Activated naive CD4-positive, alpha-beta T cell treated with anti-CD3 and anti-CD28 coated beads, Interleukin-2, amount 10 ng/mL, durations not matched to agents 7 days and 5 days (primary cell): ENCODE measurements at regions of chr2 and their contacts with region 1.

Region 1: DNA sequence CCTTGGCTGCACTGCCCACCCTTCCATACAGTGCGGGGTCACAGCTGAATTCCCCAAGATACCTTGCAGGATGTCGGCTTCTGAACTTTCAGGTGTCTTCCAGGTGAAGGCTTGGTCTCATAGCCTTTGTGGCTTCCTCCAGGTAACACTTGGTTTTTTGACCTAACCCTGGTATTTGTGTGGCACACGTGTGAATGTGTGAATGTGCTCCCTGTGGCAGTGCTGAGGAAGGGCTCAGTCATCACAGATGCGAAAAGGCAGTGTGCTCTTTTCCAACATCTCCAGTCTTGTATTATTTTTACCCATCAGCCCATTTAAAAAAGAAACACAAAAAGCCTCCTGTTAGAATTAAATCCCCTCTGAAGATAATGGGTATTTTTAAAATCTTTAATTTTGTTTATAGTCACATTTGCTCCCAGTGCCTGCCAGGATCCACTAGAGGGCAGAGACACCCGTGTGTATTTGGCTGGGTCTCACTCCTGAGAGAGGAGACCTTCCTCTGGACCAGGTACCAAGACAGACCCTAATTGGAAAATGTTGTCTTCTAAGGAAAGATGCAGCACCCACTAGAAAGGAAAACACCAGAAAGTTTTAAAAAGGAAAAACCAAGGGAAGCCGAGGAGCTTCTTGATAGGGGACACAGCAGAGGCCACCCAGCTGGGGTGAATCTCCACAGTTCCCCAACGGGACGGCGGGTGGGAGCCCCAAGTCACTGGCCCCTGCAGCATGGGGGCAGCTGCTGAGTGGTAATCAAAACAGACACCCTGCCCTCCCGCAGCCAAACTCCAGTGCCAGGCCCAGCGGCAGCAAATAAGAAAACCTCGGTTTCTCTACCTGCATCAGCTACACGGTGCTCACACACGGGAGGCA is 27.7 kb downstream of the FAM110C start:
- DNase-seq: no peak
- H3K4me3 Mint-ChIP-seq: no peak overlapping the region
- H3K27ac Mint-ChIP-seq: no peak overlapping the region
- H3K4me1 Mint-ChIP-seq: peaks cover 7% of the 10 kb centered on the region
- H3K27me3 Mint-ChIP-seq: peaks cover 34% of the 10 kb centered on the region

Region 2: DNA sequence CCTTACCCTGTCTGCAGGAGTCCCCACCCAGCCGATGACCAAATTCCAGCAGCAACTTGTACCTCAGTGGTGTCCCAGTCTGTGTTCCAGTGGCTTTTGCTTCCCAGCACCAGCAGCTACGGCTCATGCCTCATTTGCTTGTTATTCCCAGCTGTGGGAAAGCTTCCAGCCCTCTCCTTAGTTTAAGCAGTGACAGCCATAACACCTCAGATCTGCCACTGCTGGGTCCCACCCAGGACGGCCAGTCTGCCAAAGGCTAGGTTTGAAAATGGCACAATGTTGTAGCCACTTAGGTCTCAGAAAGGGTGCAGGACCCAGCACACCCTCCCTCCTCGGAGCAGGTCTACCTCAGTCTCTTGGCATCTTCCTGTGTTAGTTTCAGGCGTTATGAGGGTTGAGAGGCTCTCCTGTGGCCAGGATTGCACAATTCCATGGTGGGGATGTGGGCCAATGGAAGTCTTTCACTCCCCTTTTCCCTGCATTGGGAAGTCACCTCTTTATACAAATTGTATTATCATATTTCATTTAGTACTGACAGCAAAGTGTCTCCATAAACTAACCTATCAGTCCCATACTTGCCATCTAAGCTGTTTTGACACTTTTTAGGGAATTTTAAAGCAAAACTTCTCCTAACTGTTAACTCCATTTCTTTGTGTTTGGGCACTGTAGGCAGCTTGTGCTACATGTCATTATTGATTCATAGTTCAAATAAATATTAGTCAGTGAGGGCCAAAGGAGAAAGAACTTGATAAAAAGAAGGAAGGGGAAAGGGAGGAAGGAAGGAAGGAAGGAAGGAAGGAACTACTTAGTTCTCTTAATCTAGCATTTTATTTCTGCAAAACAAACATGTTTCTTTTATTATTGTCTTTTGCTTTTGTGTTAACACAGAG is 90.5 kb after region 1 on chr2:
- CTCF ChIA-PET with region 1: no interaction called
- DNase-seq: no peak
- H3K4me3 Mint-ChIP-seq: no peak overlapping the region
- H3K27ac Mint-ChIP-seq: no peak overlapping the region
- H3K4me1 Mint-ChIP-seq: no peaks in the 10 kb centered on the region
- H3K27me3 Mint-ChIP-seq: peaks cover 5% of the 10 kb centered on the region

Region 3: DNA sequence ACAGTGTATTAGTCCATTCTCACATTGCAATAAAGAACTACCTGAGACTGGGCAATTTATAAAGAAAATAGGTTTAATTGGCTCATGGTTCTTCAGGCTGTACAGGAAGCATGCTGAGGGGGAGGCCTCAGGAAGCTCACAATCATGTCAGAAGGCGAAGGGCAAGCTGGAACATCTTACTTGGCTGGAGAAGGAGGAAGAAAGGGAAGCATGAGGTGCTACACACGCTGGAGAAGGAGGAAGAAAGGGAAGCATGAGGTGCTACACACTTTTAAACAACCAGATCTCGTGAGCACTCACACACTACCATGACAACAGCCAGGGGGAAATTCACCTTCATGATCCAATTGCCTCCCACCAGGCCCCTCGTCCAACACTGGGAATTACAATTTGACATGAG is 123.0 kb after region 1 on chr2:
- CTCF ChIA-PET with region 1: interaction called, 15 read pairs
- DNase-seq: no peak
- H3K4me3 Mint-ChIP-seq: no peak overlapping the region
- H3K27ac Mint-ChIP-seq: no peak overlapping the region
- H3K4me1 Mint-ChIP-seq: no peaks in the 10 kb centered on the region
- H3K27me3 Mint-ChIP-seq: no peaks in the 10 kb centered on the region

Region 4: DNA sequence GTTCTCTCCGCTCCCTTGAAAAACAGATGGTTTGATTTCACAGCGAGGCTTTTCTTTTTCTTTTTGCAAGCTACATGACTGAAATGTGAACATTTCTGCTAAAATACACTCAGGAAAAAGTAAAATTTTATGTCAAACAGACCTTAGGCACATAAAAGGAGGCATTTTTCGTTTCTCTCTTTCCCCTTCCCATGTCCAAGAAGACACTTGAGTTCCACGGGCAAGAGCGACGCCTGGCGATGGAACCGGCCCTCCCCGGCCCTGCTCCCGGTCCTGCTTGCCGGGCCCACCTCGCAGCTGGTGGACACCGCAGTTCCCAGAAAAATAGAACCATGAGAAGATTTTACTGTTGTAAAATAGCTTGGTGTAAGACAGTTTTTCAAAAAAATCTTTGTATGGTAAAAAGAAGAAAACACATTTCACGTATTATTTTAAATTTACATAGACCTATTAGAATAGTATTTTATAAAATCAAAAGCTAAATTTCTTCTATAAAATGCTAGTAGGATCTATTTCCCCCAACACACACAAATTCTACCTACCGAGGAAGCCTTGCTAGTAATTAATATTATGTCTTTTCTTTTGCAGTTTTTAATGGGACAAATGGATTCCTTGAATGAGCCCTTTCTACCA is 271.6 kb after region 1 on chr2:
- CTCF ChIA-PET with region 1: interaction called, 10 read pairs
- DNase-seq: peak; percentile 70
- H3K4me3 Mint-ChIP-seq: peak overlapping the region; percentile 67
- H3K27ac Mint-ChIP-seq: no peak overlapping the region
- H3K4me1 Mint-ChIP-seq: peaks cover 6% of the 10 kb centered on the region
- H3K27me3 Mint-ChIP-seq: peaks cover 77% of the 10 kb centered on the region